CD4-positive, alpha-beta memory T cell (primary cell): ENCODE measurements at regions of chr2 and their contacts with region 1.

Region 1: GRCh38 chr2:102442967-102443828 is 20.2 kb downstream of the IL18RAP start:
- DNase-seq: peak; percentile 43 to 59 (median 56)
- H3K4me3 ChIP-seq: no peak overlapping the region
- H3K4me3 Mint-ChIP-seq: peak overlapping the region in 5 of 8 donors; percentile 19 to 75 (median 66)
- H3K27ac ChIP-seq: no peak overlapping the region
- H3K27ac Mint-ChIP-seq: peak overlapping the region in 5 of 7 donors; percentile 43 to 92 (median 53)
- H3K4me1 ChIP-seq: peaks cover 5% of the 10 kb centered on the region
- H3K4me1 Mint-ChIP-seq: peaks cover 8 to 11% (median 8%) of the 10 kb centered on the region in 4 donors
- H3K27me3 ChIP-seq: no peaks in the 10 kb centered on the region
- H3K27me3 Mint-ChIP-seq: no peaks in the 10 kb centered on the region

Region 2: DNA sequence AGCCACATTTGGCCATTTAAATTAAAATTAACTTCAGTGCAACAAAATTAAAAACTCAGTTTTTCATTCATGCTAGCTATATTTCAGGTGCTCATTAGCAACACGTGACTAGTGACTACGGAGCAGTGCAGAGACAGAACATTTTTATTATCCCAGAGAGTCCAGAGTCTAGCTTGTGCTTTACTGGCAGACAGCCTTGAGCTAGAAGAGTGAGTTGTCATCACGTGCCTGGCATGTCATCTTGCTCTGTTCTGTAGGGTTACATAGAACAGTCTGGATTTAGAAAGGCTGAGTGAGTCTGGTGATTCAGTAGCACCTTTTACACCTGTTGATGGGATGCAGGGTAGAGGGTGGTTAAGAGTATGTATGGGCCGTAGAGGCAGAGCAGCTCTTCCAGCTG is 588.3 kb before region 1 on chr2:
- CTCF ChIA-PET with region 1: no interaction called
- POLR2A ChIA-PET with region 1: no interaction called
- intact Hi-C with region 1: no loop called
- DNase-seq: no peak
- H3K4me3 ChIP-seq: no peak overlapping the region
- H3K4me3 Mint-ChIP-seq: no peak overlapping the region
- H3K27ac ChIP-seq: no peak overlapping the region
- H3K27ac Mint-ChIP-seq: peak overlapping the region in 3 of 7 donors; percentile 28 to 56 (median 43)
- H3K4me1 ChIP-seq: no peaks in the 10 kb centered on the region
- H3K4me1 Mint-ChIP-seq: peaks cover 6 to 29% (median 14%) of the 10 kb centered on the region in 4 donors
- H3K27me3 ChIP-seq: no peaks in the 10 kb centered on the region
- H3K27me3 Mint-ChIP-seq: no peaks in the 10 kb centered on the region

Region 3: DNA sequence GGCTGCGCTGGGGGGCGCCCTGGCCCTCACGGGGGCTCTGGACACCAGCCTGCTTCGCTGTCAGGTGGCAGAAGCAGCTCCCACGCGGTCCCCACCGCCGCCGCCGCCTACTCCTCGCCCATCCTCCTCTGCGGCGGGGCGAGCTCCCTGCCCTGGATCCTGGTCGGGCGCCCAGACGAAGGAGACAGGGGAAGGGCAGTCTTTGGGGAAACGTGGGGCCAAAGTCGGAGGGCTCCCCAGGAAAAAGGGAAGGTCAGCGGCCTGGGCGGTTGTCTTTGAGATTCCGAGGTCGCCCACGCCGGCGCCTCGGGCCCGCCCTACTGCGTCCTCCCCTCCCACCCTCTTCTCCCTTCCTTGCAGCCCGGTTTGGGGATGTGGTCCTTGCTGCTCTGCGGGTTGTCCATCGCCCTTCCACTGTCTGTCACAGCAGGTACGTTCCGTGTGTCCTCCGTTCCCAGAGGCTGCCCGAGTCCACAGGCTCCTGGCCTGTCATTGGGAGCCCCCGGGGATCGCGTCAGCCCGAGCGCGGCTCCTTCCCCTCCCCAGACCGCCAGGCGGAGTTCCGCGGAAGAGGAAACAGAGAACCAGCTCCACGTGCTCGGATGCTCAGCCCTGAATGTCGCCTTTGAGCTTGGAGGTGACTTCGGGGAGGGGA is 255.6 kb before region 1 on chr2:
- CTCF ChIA-PET with region 1: no interaction called
- POLR2A ChIA-PET with region 1: no interaction called
- intact Hi-C with region 1: loop called (anchors 5 kb)
- DNase-seq: peak; percentile 19 to 52 (median 39)
- H3K4me3 ChIP-seq: peak overlapping the region in 1 of 2 donors; percentile 36
- H3K4me3 Mint-ChIP-seq: peak overlapping the region; percentile 86 to 95 (median 88)
- H3K27ac ChIP-seq: no peak overlapping the region
- H3K27ac Mint-ChIP-seq: peak overlapping the region in 5 of 7 donors; percentile 81 to 93 (median 85)
- H3K4me1 ChIP-seq: peaks cover 9% of the 10 kb centered on the region
- H3K4me1 Mint-ChIP-seq: peaks cover 8 to 19% (median 13%) of the 10 kb centered on the region in 4 donors
- H3K27me3 ChIP-seq: no peaks in the 10 kb centered on the region
- H3K27me3 Mint-ChIP-seq: peaks cover 5 to 8% of the 10 kb centered on the region in 2 donors

Region 4: DNA sequence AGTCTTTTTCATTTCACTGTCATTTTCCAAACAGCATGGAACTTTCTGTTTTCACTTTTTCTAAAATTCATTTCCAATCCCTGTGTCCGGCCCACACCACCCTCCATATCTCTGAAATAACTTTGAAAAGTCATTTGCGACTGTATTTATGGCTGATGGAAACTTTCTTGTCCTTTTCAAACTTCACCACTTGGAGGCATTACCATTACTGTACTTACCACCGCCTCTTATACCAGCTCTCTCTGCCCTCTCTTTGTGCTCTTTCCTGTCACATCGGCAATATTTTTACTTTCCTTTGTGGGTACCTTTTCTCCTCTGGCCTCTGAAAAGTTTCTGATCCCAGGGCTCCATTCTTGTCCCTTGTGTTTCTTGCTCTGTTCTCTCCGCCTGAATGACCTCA is 171.4 kb before region 1 on chr2:
- CTCF ChIA-PET with region 1: interaction called, 5 read pairs
- POLR2A ChIA-PET with region 1: no interaction called
- intact Hi-C with region 1: loop called (anchors 1 kb)
- DNase-seq: peak in 3 of 5 donors; percentile 15 to 24 (median 21)
- H3K4me3 ChIP-seq: no peak overlapping the region
- H3K4me3 Mint-ChIP-seq: peak overlapping the region in 4 of 8 donors; percentile 6 to 30 (median 17)
- H3K27ac ChIP-seq: no peak overlapping the region
- H3K27ac Mint-ChIP-seq: peak overlapping the region in 4 of 7 donors; percentile 6 to 79 (median 48)
- H3K4me1 ChIP-seq: peaks cover 18% of the 10 kb centered on the region
- H3K4me1 Mint-ChIP-seq: peaks cover 10 to 23% (median 14%) of the 10 kb centered on the region in 4 donors
- H3K27me3 ChIP-seq: no peaks in the 10 kb centered on the region
- H3K27me3 Mint-ChIP-seq: peaks cover 0 to 8% of the 10 kb centered on the region in 2 donors

Region 5: GRCh38 chr2:102366406-102367112 is 76.6 kb before region 1 on chr2:
- CTCF ChIA-PET with region 1: interaction called, 71 read pairs
- POLR2A ChIA-PET with region 1: no interaction called
- intact Hi-C with region 1: loop called (anchors 2 kb)
- DNase-seq: peak; percentile 30 to 55 (median 47)
- H3K4me3 ChIP-seq: peak overlapping the region; percentile 33 to 41
- H3K4me3 Mint-ChIP-seq: peak overlapping the region; percentile 18 to 86 (median 80)
- H3K27ac ChIP-seq: peak overlapping the region; percentile 59
- H3K27ac Mint-ChIP-seq: peak overlapping the region; percentile 81 to 98 (median 93)
- H3K4me1 ChIP-seq: peaks cover 51% of the 10 kb centered on the region
- H3K4me1 Mint-ChIP-seq: peaks cover 37 to 82% (median 64%) of the 10 kb centered on the region in 4 donors
- H3K27me3 ChIP-seq: no peaks in the 10 kb centered on the region
- H3K27me3 Mint-ChIP-seq: no peaks in the 10 kb centered on the region

Region 6: DNA sequence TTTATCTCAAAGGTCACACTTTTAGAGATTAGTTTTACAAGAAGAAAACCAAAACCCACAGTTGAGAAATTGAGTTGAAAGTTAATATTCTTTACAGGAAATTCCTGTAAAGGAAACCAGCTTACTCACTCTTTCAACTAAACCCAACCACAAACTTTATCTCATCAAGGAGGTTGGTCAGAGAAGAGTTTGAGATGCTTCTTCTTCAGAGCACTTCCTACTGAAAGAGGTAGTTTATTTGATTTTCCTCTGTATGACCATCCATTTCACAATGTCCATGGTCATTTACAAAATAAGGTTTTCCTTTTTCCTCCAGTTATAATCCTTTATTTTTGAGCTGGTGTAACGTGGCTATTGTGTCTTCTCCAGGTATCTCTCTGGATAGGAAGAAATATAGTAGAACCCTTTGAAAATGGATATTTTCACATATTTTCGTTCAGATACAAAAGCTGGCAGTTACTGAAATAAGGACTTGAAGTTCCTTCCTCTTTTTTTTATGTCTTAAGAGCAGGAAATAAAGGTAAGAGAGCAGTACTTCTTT is 24.7 kb before region 1 on chr2:
- CTCF ChIA-PET with region 1: interaction called, 11 read pairs
- POLR2A ChIA-PET with region 1: interaction called, 4 read pairs
- intact Hi-C with region 1: no loop called
- DNase-seq: peak; percentile 45 to 68 (median 60)
- H3K4me3 ChIP-seq: no peak overlapping the region
- H3K4me3 Mint-ChIP-seq: peak overlapping the region; percentile 75 to 88 (median 81)
- H3K27ac ChIP-seq: peak overlapping the region; percentile 25
- H3K27ac Mint-ChIP-seq: peak overlapping the region in 6 of 7 donors; percentile 56 to 91 (median 78)
- H3K4me1 ChIP-seq: peaks cover 70% of the 10 kb centered on the region
- H3K4me1 Mint-ChIP-seq: peaks cover 43 to 74% (median 57%) of the 10 kb centered on the region in 4 donors
- H3K27me3 ChIP-seq: no peaks in the 10 kb centered on the region
- H3K27me3 Mint-ChIP-seq: no peaks in the 10 kb centered on the region

Region 7: GRCh38 chr2:102615622-102616436 is 172.6 kb after region 1 on chr2:
- CTCF ChIA-PET with region 1: no interaction called
- POLR2A ChIA-PET with region 1: no interaction called
- intact Hi-C with region 1: no loop called
- DNase-seq: peak; percentile 6 to 37 (median 8)
- H3K4me3 ChIP-seq: no peak overlapping the region
- H3K4me3 Mint-ChIP-seq: no peak overlapping the region
- H3K27ac ChIP-seq: no peak overlapping the region
- H3K27ac Mint-ChIP-seq: no peak overlapping the region
- H3K4me1 ChIP-seq: peaks cover 7% of the 10 kb centered on the region
- H3K4me1 Mint-ChIP-seq: peaks cover 6 to 11% (median 8%) of the 10 kb centered on the region in 4 donors
- H3K27me3 ChIP-seq: peaks cover 12% of the 10 kb centered on the region
- H3K27me3 Mint-ChIP-seq: peaks cover 26 to 40% of the 10 kb centered on the region in 2 donors